Heart right ventricle (tissue), 16 donors: ENCODE measurements at regions of chr2 and their contacts with region 1.

Region 1: GRCh38 chr2:147989809-147990403 is 30.6 kb downstream of the ORC4 start:
- DNase-seq: no peak
- ATAC-seq: peak in 6 of 8 donors; percentile 38 to 64 (median 48)
- H3K4me3 ChIP-seq: no peak overlapping the region
- H3K27ac ChIP-seq: no peak overlapping the region
- H3K4me1 ChIP-seq: peaks cover 0 to 10% (median 0%) of the 10 kb centered on the region in 9 donors
- H3K27me3 ChIP-seq: no peaks in the 10 kb centered on the region
- CTCF ChIP-seq: peak in 8 of 9 donors; percentile 24 to 77 (median 68)

Region 2: GRCh38 chr2:148039783-148040182 is 49.9 kb after region 1 on chr2:
- intact Hi-C with region 1: no loop called
- DNase-seq: no peak
- ATAC-seq: no peak
- H3K4me3 ChIP-seq: no peak overlapping the region
- H3K27ac ChIP-seq: no peak overlapping the region
- H3K4me1 ChIP-seq: peaks cover 0 to 19% (median 0%) of the 10 kb centered on the region in 9 donors
- H3K27me3 ChIP-seq: no peaks in the 10 kb centered on the region
- CTCF ChIP-seq: no peak

Region 3: GRCh38 chr2:148509288-148509902 is 519.5 kb after region 1 on chr2:
- intact Hi-C with region 1: loop called in 7 of 10 experiments (anchors 5 to 10 kb)
- DNase-seq: peak; percentile 79 to 82
- ATAC-seq: peak; percentile 96 to 99 (median 98)
- H3K4me3 ChIP-seq: peak overlapping the region in 7 of 10 donors; percentile 21 to 46 (median 40)
- H3K27ac ChIP-seq: peak overlapping the region in 5 of 10 donors; percentile 16 to 61 (median 29)
- H3K4me1 ChIP-seq: peaks cover 0 to 17% (median 7%) of the 10 kb centered on the region in 9 donors
- H3K27me3 ChIP-seq: no peaks in the 10 kb centered on the region
- CTCF ChIP-seq: peak; percentile 70 to 95 (median 91)

Region 4: GRCh38 chr2:148519013-148519412 is 529.1 kb after region 1 on chr2:
- intact Hi-C with region 1: loop called in 1 of 10 experiments (anchors 10 kb)
- DNase-seq: no peak
- ATAC-seq: no peak
- H3K4me3 ChIP-seq: no peak overlapping the region
- H3K27ac ChIP-seq: no peak overlapping the region
- H3K4me1 ChIP-seq: no peaks in the 10 kb centered on the region
- H3K27me3 ChIP-seq: no peaks in the 10 kb centered on the region
- CTCF ChIP-seq: no peak